ENCODE measurements at regions of chr1 and their contacts with region 1.

Region 1: DNA sequence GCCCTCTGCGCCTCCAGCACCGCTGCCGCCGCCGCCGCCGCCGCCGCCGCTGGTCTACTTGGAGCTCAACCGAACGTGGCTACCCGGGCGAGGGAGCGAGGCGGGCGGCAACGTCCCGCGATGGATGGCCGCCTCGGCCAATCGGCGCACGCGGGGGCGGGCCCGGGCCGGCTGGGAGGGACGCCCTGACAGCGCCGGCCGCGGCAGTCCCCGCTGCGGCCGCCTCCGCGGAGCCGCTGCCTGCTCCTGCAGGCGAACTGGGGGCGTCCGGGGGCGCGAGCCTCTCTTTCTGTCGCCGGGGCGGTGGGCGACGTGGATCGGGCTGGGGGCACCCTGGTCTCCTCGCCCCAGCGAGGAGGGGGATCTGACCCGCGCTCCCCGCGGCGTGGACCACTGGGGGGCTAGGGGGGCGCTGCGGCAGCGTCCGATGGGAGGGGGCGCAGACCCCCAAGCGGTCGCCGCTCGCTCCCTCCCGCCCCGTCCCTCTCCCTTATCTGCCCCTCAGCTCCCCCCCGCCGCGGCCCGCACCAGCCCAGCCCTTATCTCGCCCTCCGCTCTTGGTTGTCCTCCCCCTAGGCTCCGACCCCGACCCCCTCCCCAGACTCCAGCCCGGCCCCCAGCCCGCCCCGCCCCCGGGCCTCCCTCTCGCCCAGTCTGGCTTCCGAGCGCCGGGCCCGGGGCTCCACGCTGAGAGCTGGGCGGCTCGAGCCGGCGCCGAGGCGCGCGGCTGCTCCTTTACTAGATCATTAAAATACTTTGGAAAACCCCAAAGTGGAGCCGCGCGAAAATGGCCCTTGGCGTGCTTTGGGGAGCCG is at the start of gene SSBP3:
- DNase-seq: peak; percentile 95
- ATAC-seq: peak; percentile 92
- total RNA-seq, gene SSBP3: 49.1 TPM

Region 2: GRCh38 chr1:54070171-54070837 is 336.2 kb before region 1 on chr1:
- intact Hi-C with region 1: loop called (anchors 10 kb)
- DNase-seq: no peak
- ATAC-seq: peak; percentile 64

Region 3: GRCh38 chr1:54121482-54122134 is 284.9 kb before region 1 on chr1:
- intact Hi-C with region 1: loop called (anchors 10 kb)
- DNase-seq: peak; percentile 85
- ATAC-seq: peak; percentile 95

Region 4: GRCh38 chr1:54199765-54200518 is 206.6 kb before region 1 on chr1 and contains the starts of genes CYB5RL and MRPL37:
- intact Hi-C with region 1: loop called (anchors 5 kb)
- DNase-seq: peak; percentile 93
- ATAC-seq: peak; percentile 100
- total RNA-seq, gene CYB5RL: 4.8 TPM
- total RNA-seq, gene MRPL37: 78.6 TPM

Region 5: DNA sequence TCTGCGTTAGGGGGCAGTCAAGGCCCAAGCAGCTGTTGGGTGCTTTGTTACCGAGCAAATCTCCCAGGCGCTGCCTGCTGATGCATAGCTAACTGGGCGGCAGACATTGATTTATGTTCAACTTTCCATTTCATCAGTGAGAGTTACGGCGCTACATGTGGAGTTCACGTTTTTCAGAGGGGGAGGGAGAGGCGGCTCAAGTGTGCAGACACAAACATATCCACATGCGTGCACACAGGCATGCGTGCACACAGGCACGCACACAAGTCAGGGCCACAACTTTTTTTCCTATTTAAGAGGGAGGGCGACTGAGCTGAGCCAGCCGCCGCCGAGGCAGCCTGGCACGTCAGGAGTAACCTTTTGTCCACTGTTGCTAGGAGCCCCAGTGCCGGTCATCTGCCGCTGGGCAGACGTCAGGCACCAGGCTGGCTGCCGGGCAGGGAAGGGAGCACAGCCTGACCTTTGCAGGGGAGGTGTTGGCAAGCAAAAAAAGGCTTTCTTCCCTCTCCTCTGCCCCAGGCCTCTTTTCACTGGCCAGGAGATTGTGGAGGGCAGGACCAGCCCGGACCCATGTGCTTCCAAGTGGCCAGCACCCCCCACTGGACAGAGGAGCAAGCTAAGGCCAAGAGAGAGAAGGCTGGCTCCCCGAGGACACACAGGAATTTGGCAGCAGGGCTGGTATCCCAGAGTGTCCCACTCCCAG is 133.3 kb before region 1 on chr1:
- intact Hi-C with region 1: loop called (anchors 10 kb)
- DNase-seq: peak; percentile 72
- ATAC-seq: peak; percentile 57

Region 6: DNA sequence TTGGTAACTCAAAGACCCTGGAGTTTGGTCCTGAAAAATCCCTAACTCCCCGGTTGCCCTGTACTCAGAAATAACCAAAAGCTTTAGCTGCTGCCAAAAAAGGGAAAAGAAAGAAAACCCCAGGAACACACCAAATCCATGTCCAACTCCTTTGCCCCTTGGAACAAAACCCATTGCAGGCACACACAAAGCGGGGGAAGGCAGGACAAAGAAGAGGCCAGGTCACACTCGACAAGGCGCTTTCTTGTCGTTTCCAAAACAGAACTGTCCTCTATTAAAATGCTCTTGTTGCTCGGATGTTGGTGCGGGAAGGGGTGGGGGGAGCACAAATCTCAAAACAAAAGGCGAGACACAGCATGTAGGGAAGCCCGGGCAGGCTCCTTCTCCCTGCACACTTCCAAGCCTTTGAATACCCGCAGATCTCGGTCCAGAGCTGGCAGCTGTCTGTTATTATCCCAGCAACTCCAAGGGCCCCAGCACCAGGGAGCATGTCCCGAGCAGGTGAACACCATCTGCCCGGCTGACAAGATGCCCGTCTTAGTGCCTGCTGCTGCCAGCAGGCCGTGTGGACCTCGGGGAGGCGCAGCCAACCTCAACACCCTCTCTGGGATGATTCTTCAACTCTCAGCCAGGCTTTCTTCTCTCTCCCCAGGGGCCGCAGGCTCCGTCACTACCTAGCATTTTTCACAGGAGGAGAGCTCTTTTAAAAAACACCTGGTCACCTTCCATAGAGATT is 96.7 kb before region 1 on chr1:
- intact Hi-C with region 1: loop called (anchors 5 kb)
- DNase-seq: no peak
- ATAC-seq: no peak

Region 7: DNA sequence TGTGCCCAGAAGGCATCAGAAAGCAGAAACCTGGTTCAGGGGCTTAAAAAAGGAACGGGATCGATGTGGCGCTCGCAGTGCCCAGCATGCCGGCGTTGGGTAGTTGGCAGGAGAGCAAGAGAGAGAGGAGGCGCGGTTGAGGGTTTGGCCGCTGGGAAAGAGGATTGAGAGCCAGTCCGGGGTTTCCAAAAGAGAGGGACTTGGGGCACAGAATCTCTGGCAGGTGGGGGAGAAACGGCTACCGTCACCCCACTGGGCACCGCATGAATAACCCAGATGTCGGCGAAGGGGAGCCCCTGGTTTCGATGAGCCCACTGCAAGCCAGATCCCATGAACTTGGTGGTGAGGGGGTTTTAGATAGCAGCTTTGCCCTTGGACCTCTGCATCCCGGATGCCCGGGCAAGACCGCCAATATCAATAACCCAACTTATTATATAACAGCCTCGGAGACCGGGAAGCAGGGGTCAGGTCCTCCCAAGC is 81.1 kb after region 1 on chr1:
- intact Hi-C with region 1: loop called (anchors 1 kb)
- DNase-seq: peak; percentile 57
- ATAC-seq: peak; percentile 15